PC-3 (cell line): ENCODE measurements at regions of chr10 and their contacts with region 1.

Region 1: GRCh38 chr10:51010977-51011376 is 63.3 kb upstream of the PRKG1 start:
- DNase-seq: peak; percentile 93
- ATAC-seq: peak; percentile 60
- H3K4me3 ChIP-seq: no peak overlapping the region
- H3K27ac ChIP-seq: no peak overlapping the region
- H3K4me1 ChIP-seq: peaks cover 7% of the 10 kb centered on the region
- H3K27me3 ChIP-seq: peaks cover 15% of the 10 kb centered on the region
- CTCF ChIP-seq: peak; percentile 100

Region 2: DNA sequence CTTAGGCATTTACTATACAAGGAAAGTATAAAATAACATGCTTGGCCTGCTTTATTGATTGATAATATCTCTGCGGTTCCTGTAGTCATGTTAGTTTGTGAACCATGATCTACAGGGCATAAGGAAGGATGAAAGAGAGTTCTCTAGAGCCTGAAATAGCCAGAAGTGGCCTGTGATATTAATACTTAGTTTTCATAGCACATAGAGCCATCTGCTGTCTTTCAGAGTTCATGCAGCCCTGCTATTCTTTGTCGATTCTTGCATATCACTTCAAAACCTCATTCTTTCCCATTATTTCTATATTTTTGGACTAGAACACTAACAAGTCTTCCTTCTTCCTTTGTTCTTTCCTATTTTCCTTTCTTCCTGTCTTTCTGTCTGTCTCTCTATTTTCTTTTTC is 36.9 kb after region 1 on chr10:
- CTCF ChIA-PET with region 1: no interaction called
- POLR2A ChIA-PET with region 1: no interaction called
- intact Hi-C with region 1: loop called (anchors 1 kb)
- DNase-seq: peak; percentile 41
- ATAC-seq: peak; percentile 60
- H3K4me3 ChIP-seq: no peak overlapping the region
- H3K27ac ChIP-seq: no peak overlapping the region
- H3K4me1 ChIP-seq: no peaks in the 10 kb centered on the region
- H3K27me3 ChIP-seq: peaks cover 29% of the 10 kb centered on the region; the same call in 1 of the 2 replicates
- CTCF ChIP-seq: peak; percentile 58

Region 3: GRCh38 chr10:51422311-51423120 is 411.5 kb after region 1 on chr10:
- CTCF ChIA-PET with region 1: no interaction called
- POLR2A ChIA-PET with region 1: no interaction called
- intact Hi-C with region 1: loop called (anchors 1 kb)
- DNase-seq: peak; percentile 95
- ATAC-seq: peak; percentile 95
- H3K4me3 ChIP-seq: no peak overlapping the region
- H3K27ac ChIP-seq: no peak overlapping the region
- H3K4me1 ChIP-seq: no peaks in the 10 kb centered on the region; the same call in 1 of the 2 replicates
- H3K27me3 ChIP-seq: no peaks in the 10 kb centered on the region
- CTCF ChIP-seq: peak; percentile 100

Region 4: GRCh38 chr10:51892965-51893658 is 882.1 kb after region 1 on chr10:
- CTCF ChIA-PET with region 1: no interaction called
- POLR2A ChIA-PET with region 1: no interaction called
- intact Hi-C with region 1: loop called (anchors 5 kb)
- DNase-seq: peak; percentile 85
- ATAC-seq: peak; percentile 93
- H3K4me3 ChIP-seq: no peak overlapping the region
- H3K27ac ChIP-seq: no peak overlapping the region
- H3K4me1 ChIP-seq: no peaks in the 10 kb centered on the region
- H3K27me3 ChIP-seq: no peaks in the 10 kb centered on the region
- CTCF ChIP-seq: peak; percentile 98

Region 5: DNA sequence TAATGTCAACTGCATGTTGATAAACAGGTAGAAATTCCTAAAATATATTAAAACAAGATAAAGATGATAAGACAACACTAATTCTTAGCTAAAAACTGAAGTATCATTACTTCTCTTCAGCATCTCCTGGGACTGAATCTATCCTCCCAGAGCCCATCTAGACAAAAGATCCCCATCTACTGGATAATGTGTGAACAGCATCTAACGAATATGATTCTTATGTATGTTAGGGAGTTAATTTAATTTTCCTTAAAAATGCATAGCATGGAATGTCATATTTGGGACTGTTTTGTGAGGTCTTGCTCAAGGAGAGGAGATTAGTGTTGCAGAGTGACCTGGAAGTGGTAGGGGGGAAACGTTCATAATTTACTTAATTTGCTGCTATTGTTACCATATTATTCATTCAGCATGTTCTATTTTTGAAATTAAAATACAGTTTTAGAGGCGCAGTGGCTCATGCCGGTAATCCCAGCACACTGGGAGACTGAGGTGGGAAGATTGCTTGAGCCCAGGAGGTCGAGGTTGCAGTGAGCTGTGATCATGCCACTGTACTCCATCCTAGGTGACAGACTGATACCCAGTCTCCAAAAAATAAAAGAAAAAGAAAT is 993.5 kb after region 1 on chr10:
- CTCF ChIA-PET with region 1: no interaction called
- POLR2A ChIA-PET with region 1: no interaction called
- intact Hi-C with region 1: loop called (anchors 1 kb)
- DNase-seq: peak; percentile 94
- ATAC-seq: peak; percentile 89
- H3K4me3 ChIP-seq: no peak overlapping the region
- H3K27ac ChIP-seq: no peak overlapping the region
- H3K4me1 ChIP-seq: no peaks in the 10 kb centered on the region
- H3K27me3 ChIP-seq: peaks cover 15% of the 10 kb centered on the region; the same call in 1 of the 2 replicates
- CTCF ChIP-seq: peak; percentile 96